Activated naive CD4-positive, alpha-beta T cell treated with anti-CD3 and anti-CD28 coated beads for 36 hours (primary cell): ENCODE measurements at regions of chr6 and their contacts with region 1.

Region 1: GRCh38 chr6:12605888-12606345 is 110.7 kb upstream of the PHACTR1 start:
- DNase-seq: peak; percentile 67
- H3K4me3 Mint-ChIP-seq: no peak overlapping the region
- H3K27ac Mint-ChIP-seq: no peak overlapping the region
- H3K4me1 Mint-ChIP-seq: peaks cover 11% of the 10 kb centered on the region
- H3K27me3 Mint-ChIP-seq: peaks cover 24% of the 10 kb centered on the region

Region 2: DNA sequence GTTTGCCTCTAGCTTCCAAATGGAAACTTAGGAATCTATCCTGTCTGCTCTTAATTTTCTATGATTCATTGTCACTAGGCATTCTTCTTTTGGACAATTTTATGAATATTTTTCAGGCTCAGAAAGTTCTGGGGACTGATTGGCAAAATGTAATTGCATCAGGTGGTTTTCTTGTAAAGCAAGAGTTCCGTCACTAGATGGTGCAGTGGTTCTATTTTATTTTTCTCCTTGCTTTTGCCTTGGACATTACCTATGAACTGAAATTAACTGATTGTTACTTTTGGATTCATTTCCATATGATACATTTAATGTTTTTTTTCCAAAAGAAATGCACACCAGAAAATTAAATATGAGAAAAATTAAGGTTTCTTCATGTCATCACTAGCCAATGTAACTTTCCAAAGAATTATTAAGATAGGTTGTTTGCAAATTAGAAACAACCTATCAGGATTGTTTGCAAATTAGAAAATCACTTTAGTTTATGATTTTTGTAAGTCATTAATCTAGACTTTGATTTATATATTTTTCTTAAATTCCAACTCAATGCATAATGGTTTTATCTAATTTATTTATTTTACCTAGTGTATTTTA is 1020.4 kb before region 1 on chr6:
- CTCF ChIA-PET with region 1: interaction called, 3 read pairs
- intact Hi-C with region 1: loop called (anchors 1 kb)
- DNase-seq: peak; percentile 14
- H3K4me3 Mint-ChIP-seq: no peak overlapping the region
- H3K27ac Mint-ChIP-seq: no peak overlapping the region
- H3K4me1 Mint-ChIP-seq: no peaks in the 10 kb centered on the region
- H3K27me3 Mint-ChIP-seq: no peaks in the 10 kb centered on the region

Region 3: GRCh38 chr6:11700118-11700718 is 905.7 kb before region 1 on chr6:
- CTCF ChIA-PET with region 1: no interaction called
- intact Hi-C with region 1: loop called (anchors 5 kb)
- DNase-seq: no peak
- H3K4me3 Mint-ChIP-seq: no peak overlapping the region
- H3K27ac Mint-ChIP-seq: no peak overlapping the region
- H3K4me1 Mint-ChIP-seq: peaks cover 28% of the 10 kb centered on the region
- H3K27me3 Mint-ChIP-seq: no peaks in the 10 kb centered on the region

Region 4: GRCh38 chr6:12075067-12075563 is 530.8 kb before region 1 on chr6:
- CTCF ChIA-PET with region 1: no interaction called
- intact Hi-C with region 1: loop called (anchors 10 kb)
- DNase-seq: peak; percentile 56
- H3K4me3 Mint-ChIP-seq: no peak overlapping the region
- H3K27ac Mint-ChIP-seq: no peak overlapping the region
- H3K4me1 Mint-ChIP-seq: peaks cover 59% of the 10 kb centered on the region
- H3K27me3 Mint-ChIP-seq: no peaks in the 10 kb centered on the region

Region 5: GRCh38 chr6:12150812-12151432 is 455.0 kb before region 1 on chr6:
- CTCF ChIA-PET with region 1: no interaction called
- intact Hi-C with region 1: loop called (anchors 10 kb)
- DNase-seq: peak; percentile 55
- H3K4me3 Mint-ChIP-seq: no peak overlapping the region
- H3K27ac Mint-ChIP-seq: no peak overlapping the region
- H3K4me1 Mint-ChIP-seq: peaks cover 16% of the 10 kb centered on the region
- H3K27me3 Mint-ChIP-seq: no peaks in the 10 kb centered on the region

Region 6: DNA sequence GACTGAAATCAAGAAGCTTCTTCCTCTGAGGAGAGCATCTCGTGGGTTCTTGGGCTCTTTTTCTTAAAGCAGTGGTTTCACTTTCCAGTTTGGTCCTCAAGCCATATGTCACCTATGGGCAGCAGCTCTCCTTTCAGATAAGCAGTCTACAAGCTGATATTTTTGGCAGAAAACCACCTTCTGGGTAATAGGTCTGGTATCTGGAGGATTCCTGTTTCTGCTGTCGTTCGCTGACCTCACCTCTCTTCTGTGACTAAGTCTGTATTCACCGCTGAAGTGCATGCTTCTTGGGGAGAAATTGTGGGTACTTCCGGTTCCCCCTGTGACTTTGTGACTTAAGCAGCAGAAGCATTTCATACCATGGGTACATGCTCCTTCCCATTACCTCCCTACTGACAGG is 122.2 kb before region 1 on chr6:
- CTCF ChIA-PET with region 1: no interaction called
- intact Hi-C with region 1: loop called (anchors 10 kb)
- DNase-seq: peak; percentile 38
- H3K4me3 Mint-ChIP-seq: no peak overlapping the region
- H3K27ac Mint-ChIP-seq: no peak overlapping the region
- H3K4me1 Mint-ChIP-seq: peaks cover 16% of the 10 kb centered on the region
- H3K27me3 Mint-ChIP-seq: peaks cover 5% of the 10 kb centered on the region

Region 7: DNA sequence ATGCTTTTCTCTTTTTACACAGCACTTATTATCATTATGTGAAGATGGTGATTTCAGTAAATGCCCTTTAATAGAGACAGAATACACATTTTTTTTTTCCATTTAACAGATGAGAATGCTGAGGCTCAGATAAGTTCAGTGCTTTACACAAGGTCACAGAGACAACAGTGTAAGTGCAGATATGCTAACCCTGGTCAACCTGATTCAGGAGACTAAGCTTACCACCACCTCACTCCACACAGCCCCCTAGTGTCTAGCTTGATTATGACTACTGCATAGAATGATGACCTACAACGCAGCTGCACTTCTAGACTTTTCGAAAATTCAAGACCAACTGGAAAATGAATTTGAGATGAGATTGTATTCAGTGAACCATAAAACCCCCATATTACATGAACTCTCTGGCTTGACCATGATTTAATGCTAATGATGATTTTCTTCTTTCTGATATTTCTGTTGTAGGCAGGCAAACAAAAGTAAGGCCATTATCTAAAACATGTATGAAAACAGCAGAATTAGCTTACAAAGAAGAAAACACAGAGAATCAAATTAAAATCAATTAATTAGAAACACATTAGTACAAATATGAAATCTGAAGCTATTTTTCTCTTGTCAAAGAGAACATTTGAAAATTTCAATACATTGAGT is 101.5 kb before region 1 on chr6:
- CTCF ChIA-PET with region 1: no interaction called
- intact Hi-C with region 1: loop called (anchors 5 kb)
- DNase-seq: peak; percentile 22
- H3K4me3 Mint-ChIP-seq: no peak overlapping the region
- H3K27ac Mint-ChIP-seq: no peak overlapping the region
- H3K4me1 Mint-ChIP-seq: peaks cover 3% of the 10 kb centered on the region
- H3K27me3 Mint-ChIP-seq: peaks cover 3% of the 10 kb centered on the region

Region 8: DNA sequence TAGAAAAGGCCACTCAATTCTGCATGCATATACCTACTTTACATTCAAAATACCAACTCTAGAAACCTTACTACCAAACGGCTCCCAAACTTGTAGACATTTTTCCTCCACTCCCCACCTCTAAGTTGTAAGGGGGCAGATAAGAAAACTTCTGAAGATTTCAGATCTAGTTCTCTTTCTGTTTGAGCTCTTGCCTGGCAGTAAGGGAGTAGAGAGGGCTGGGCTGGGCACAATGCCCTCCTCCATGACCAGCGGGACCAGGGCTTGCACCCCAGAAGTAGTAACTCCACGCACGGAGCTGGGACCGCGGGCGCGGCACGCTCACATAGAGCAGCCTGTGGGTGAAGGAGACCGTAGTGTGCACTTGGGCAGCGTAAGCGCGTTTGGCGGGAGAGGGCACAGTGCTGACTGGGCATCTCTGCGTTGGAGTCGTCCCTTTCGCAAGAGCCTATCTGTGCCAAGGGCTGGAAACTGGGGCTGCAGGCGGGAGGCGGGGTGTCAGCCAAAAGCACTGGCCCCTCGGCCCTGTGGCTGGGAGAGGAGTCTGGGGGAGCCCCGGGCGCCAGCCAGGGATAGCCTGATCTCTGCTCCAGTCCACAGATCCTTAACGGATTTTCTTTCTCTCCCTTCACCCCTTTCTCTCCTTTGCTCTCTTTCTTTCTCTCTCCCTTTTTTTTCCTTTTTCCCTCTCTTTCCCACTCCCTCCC is 143.1 kb after region 1 on chr6:
- CTCF ChIA-PET with region 1: no interaction called
- intact Hi-C with region 1: no loop called
- DNase-seq: no peak
- H3K4me3 Mint-ChIP-seq: no peak overlapping the region
- H3K27ac Mint-ChIP-seq: no peak overlapping the region
- H3K4me1 Mint-ChIP-seq: peaks cover 3% of the 10 kb centered on the region
- H3K27me3 Mint-ChIP-seq: peaks cover 53% of the 10 kb centered on the region